ENCODE measurements at regions of chr21 and their contacts with region 1.

Region 1: DNA sequence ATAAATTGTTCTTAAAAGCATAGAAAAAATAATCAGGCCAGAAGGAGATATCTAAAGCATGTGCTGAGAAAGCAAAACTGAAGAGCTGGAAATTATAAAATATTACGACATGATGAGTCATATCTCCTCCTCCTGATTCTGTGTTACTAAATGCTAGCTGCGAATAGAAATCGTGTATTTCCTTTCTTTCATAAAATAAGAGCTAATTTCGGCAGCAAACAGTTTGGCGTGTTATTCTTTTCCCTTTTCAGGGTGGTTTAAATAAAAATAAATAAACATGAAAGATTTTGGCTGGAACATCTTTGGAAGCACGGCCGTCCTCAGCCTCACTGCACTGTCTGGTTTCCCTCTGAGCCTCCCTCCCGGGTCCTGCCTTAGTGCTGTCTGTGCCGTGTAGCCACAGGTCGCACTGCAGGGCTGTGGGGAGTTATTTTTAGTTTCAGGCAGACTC is 56.0 kb downstream of the ADARB1 start:
- DNase-seq: no peak
- H3K4me3 ChIP-seq: no peak overlapping the region
- H3K4me3 Mint-ChIP-seq: no peak overlapping the region
- H3K27ac ChIP-seq: no peak overlapping the region
- H3K27ac Mint-ChIP-seq: peak overlapping the region in 1 of 8 donors; percentile 54
- H3K4me1 ChIP-seq: peaks cover 13% of the 10 kb centered on the region
- H3K4me1 Mint-ChIP-seq: peaks cover 8 to 26% (median 12%) of the 10 kb centered on the region in 3 donors
- H3K27me3 ChIP-seq: no peaks in the 10 kb centered on the region
- H3K27me3 Mint-ChIP-seq: no peaks in the 10 kb centered on the region

Region 2: GRCh38 chr21:44939532-44940115 is 190.7 kb before region 1 on chr21 and contains the start of gene SLX9:
- CTCF ChIA-PET with region 1: interaction called, 194 read pairs
- POLR2A ChIA-PET with region 1: no interaction called
- DNase-seq: peak; percentile 63 to 81 (median 71)
- H3K4me3 ChIP-seq: peak within 1 kb of the TSS; percentile 86
- H3K4me3 Mint-ChIP-seq: peak within 1 kb of the TSS; percentile 88 to 99 (median 89)
- H3K27ac ChIP-seq: peak within 1 kb of the TSS; percentile 70
- H3K27ac Mint-ChIP-seq: peak within 1 kb of the TSS; percentile 75 to 92 (median 84)
- H3K4me1 ChIP-seq: peaks cover 40% of the 10 kb centered on the region
- H3K4me1 Mint-ChIP-seq: peaks cover 34 to 46% (median 40%) of the 10 kb centered on the region in 3 donors
- H3K27me3 ChIP-seq: no peaks in the 10 kb centered on the region
- H3K27me3 Mint-ChIP-seq: peaks cover 0 to 1% of the 10 kb centered on the region in 2 donors
- total RNA-seq, gene SLX9: 68.1 to 71.1 TPM

Region 3: DNA sequence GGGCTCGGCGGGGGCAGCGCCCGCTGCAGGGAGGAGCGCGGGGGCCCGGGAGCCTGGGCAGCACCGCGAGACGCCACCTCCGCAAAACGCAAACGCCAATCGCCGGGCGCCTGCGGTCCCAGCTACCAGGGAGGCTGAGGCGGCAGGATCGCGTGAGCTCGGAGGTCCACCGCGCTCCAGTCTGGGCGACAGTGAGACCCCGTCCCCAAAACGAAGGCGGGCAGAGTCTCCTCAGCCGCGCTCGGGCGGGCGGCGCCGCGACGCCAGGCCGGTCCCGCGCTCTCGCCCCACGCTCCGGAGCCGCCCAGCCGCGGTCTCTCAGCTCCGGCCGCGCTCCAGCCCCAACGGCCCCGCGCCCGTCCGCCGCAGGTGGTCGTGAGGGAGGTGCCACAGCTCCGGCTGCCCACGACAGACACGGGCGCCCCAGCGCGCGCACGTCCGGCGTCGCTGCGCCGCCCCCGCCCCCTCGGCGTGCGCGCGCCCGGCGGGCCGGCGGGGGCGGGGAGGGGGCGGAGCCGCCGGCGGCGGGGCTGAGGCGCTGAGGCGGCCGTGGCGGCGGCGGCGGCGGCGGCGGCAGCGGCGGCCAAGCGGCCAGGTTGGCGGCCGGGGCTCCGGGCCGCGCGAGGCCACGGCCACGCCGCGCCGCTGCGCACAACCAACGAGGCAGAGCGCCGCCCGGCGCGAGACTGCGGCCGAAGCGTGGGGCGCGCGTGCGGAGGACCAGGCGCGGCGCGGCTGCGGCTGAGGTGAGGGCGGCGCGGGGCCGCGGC is 56.1 kb before region 1 on chr21 and contains the start of gene ADARB1:
- CTCF ChIA-PET with region 1: interaction called, 17 read pairs
- POLR2A ChIA-PET with region 1: no interaction called
- DNase-seq: peak; percentile 55 to 76 (median 61)
- H3K4me3 ChIP-seq: peak within 1 kb of the TSS; percentile 71
- H3K4me3 Mint-ChIP-seq: peak within 1 kb of the TSS; percentile 91 to 99 (median 97)
- H3K27ac ChIP-seq: peak within 1 kb of the TSS; percentile 43
- H3K27ac Mint-ChIP-seq: peak within 1 kb of the TSS; percentile 89 to 98 (median 94)
- H3K4me1 ChIP-seq: peaks cover 44% of the 10 kb centered on the region
- H3K4me1 Mint-ChIP-seq: peaks cover 38 to 47% (median 43%) of the 10 kb centered on the region in 3 donors
- H3K27me3 ChIP-seq: no peaks in the 10 kb centered on the region
- H3K27me3 Mint-ChIP-seq: peaks cover 0 to 1% of the 10 kb centered on the region in 2 donors
- total RNA-seq, gene ADARB1: 28.9 to 29.5 TPM